Activated naive CD4-positive, alpha-beta T cell treated with anti-CD3 and anti-CD28 coated beads for 36 hours (primary cell): ENCODE measurements at regions of chr3 and their contacts with region 1.

Region 1: GRCh38 chr3:186826976-186827731 is 15.4 kb upstream of the ADIPOQ start:
- DNase-seq: peak; percentile 82
- H3K4me3 Mint-ChIP-seq: peak overlapping the region; percentile 78
- H3K27ac Mint-ChIP-seq: peak overlapping the region; percentile 69
- H3K4me1 Mint-ChIP-seq: peaks cover 30% of the 10 kb centered on the region
- H3K27me3 Mint-ChIP-seq: peaks cover 38% of the 10 kb centered on the region

Region 2: GRCh38 chr3:185824476-185825378 is 1002.4 kb before region 1 on chr3 and contains the start of gene IGF2BP2:
- CTCF ChIA-PET with region 1: no interaction called
- intact Hi-C with region 1: loop called (anchors 5 kb)
- DNase-seq: peak; percentile 57
- H3K4me3 Mint-ChIP-seq: peak within 1 kb of the TSS; percentile 81
- H3K27ac Mint-ChIP-seq: no peak within 1 kb of the TSS
- H3K4me1 Mint-ChIP-seq: peaks cover 3% of the 10 kb centered on the region
- H3K27me3 Mint-ChIP-seq: peaks cover 57% of the 10 kb centered on the region
- total RNA-seq, gene IGF2BP2: 0.43 to 0.44 TPM